ENCODE measurements at regions of chr6 and their contacts with region 1.

Region 1: DNA sequence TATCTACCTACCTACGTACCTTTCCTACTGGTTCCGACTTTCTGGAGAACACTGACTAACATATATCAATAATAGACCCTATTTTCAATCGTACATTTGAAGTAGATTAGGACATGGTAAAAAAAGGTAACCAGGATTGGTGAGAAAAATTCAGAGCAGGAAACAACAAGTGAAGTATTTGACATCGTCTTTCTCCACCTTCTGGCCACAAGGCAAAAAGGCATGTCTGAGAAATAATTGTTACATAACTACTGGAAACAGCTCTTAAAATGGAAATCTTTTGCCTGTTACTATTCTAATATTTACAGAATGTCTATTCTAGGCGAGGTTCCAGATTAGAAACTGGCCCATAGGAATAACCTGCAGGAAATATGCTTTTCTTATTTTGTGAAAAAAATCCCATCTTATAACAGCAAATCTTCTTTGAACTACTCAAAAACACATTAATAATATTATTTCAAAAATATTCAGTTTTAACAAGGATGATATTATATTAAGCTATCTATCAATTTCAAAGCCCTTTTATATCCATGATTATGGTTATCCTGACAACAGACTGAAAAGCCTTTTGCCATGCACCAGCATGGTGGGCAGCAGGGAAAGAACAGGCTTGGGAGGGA is 80.8 kb downstream of the RCAN2 start:
- DNase-seq: peak; percentile 74
- ATAC-seq: peak; percentile 43
- H3K4me3 ChIP-seq: no peak overlapping the region
- H3K4me3 Mint-ChIP-seq: no peak overlapping the region
- H3K27ac ChIP-seq: no peak overlapping the region
- H3K27ac Mint-ChIP-seq: no peak overlapping the region
- H3K4me1 ChIP-seq: no peaks in the 10 kb centered on the region
- H3K4me1 Mint-ChIP-seq: no peaks in the 10 kb centered on the region
- H3K27me3 ChIP-seq: no peaks in the 10 kb centered on the region
- H3K27me3 Mint-ChIP-seq: no peaks in the 10 kb centered on the region
- CTCF ChIP-seq: peak; percentile 97

Region 2: DNA sequence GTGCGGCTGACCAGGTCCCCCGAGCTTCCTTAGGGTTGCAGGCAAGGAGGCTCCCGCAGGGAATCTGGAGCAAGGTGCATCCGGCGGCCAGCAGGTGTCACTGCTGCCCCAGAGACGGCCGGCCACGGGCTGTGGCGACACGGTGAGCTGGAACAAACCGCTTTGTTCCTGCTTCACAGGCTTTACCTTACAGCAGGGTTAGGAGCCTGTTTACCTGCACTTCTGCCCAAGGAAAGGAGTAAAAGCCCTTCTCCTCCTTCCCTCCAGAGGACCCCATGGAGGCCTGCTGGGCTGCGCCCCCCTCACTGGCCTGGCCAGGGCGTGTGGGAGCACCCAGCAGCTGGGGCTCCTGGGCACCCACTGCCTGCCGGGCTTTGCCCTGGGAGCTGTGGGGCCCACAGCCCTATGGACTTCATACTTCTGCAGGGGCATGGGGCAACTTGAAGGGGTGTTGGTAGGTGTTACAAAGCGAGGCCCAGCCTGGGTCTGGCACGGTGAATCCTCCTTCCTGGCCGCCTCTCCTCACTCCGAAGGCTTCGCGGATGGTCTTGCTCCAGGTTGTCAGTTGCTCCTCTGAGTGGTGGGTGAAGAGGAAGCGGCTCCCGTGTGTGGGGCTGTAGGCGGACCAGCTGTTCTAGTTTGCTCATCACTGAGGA is 1934.5 kb before region 1 on chr6:
- CTCF ChIA-PET with region 1: interaction called, 13 read pairs
- POLR2A ChIA-PET with region 1: no interaction called
- intact Hi-C with region 1: no loop called
- DNase-seq: peak; percentile 63
- ATAC-seq: peak; percentile 39
- H3K4me3 ChIP-seq: no peak overlapping the region
- H3K4me3 Mint-ChIP-seq: no peak overlapping the region
- H3K27ac ChIP-seq: no peak overlapping the region
- H3K27ac Mint-ChIP-seq: no peak overlapping the region
- H3K4me1 ChIP-seq: peaks cover 0 to 6% of the 10 kb centered on the region in 2 donors
- H3K4me1 Mint-ChIP-seq: no peaks in the 10 kb centered on the region
- H3K27me3 ChIP-seq: peaks cover 0 to 9% (median 1%) of the 10 kb centered on the region in 4 experiments
- H3K27me3 Mint-ChIP-seq: peaks cover 15% of the 10 kb centered on the region
- CTCF ChIP-seq: peak; percentile 72

Region 3: DNA sequence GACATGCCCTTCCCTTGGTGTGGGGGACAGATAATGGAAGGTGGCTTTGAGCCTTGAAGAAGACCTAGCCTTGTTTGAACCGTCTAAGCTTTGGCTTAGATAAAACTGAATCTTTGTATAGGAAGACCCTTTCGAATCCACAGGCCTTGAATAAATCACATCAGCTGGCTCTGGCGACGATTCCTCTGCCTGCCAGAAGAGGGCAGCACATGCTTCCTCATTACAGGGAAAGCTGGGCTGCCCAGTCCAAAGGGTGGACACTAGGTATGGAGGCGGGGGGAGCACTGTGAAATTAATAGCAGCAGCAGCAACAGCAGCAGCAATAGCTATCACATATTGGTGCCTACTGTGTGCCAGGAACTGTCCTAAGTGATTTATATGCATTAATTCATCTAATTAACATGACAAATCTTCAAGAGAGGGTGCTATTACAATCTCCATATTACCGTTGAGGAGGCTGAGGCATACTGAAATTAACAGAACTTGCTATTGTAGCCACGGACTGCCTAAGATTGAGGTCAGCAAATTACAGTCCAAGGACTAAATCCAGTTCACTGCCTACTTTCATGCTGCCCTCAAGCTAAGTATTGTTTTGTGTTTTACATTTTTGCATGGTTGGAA is 479.9 kb before region 1 on chr6:
- CTCF ChIA-PET with region 1: interaction called, 34 read pairs
- POLR2A ChIA-PET with region 1: no interaction called
- intact Hi-C with region 1: loop called (anchors 1 kb)
- DNase-seq: peak; percentile 63
- ATAC-seq: no peak
- H3K4me3 ChIP-seq: no peak overlapping the region
- H3K4me3 Mint-ChIP-seq: no peak overlapping the region
- H3K27ac ChIP-seq: no peak overlapping the region
- H3K27ac Mint-ChIP-seq: no peak overlapping the region
- H3K4me1 ChIP-seq: no peaks in the 10 kb centered on the region
- H3K4me1 Mint-ChIP-seq: no peaks in the 10 kb centered on the region
- H3K27me3 ChIP-seq: no peaks in the 10 kb centered on the region
- H3K27me3 Mint-ChIP-seq: peaks cover 4% of the 10 kb centered on the region
- CTCF ChIP-seq: peak; percentile 99

Region 4: DNA sequence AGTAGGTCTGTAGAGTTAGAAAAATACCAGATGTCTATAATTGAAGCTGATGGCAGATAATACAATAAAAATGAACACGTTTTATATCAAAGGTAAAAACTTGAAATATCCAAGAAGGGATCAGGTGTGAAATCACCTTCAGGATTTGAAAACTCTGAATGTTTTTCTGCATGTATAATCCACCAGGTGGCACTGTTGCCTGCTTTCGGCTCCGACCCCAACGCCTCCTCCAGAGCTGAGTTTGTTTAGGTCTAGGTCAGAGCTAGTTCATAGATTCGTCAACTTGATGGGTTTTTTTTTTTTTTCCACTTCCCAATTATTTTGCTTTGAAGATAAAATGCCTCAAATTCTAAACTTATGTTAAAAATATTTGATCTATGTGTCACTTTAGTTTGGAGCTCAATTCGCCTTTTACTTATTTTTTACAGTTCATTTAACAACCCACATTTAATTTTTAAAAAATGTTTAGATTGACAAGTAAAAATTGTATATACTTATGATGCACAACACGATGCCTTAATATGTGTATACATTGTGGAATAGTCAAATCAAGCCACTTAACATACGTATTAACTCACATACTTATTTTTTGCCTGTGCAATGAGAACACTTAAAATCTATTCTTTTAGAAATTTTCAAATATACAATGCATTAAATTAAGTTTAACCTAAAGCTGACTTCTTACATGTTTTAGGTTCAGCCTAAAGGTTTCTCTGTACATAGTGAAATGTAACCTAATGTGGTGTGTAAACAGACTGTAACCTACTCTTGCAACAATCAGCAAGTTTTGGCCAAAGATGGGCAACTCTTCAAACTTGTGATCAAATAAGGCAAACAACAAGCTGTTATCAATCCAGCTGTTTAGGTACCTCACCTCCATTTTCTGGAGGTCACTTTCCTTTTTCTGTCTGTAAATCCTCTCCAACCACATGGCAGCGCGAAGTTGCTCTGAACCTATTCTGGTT is 320.0 kb before region 1 on chr6:
- CTCF ChIA-PET with region 1: interaction called, 340 read pairs
- POLR2A ChIA-PET with region 1: no interaction called
- intact Hi-C with region 1: no loop called
- DNase-seq: peak; percentile 70
- ATAC-seq: peak; percentile 54
- H3K4me3 ChIP-seq: no peak overlapping the region
- H3K4me3 Mint-ChIP-seq: no peak overlapping the region
- H3K27ac ChIP-seq: no peak overlapping the region
- H3K27ac Mint-ChIP-seq: no peak overlapping the region
- H3K4me1 ChIP-seq: no peaks in the 10 kb centered on the region
- H3K4me1 Mint-ChIP-seq: no peaks in the 10 kb centered on the region
- H3K27me3 ChIP-seq: peaks cover 0 to 3% (median 1%) of the 10 kb centered on the region in 4 experiments
- H3K27me3 Mint-ChIP-seq: peaks cover 24% of the 10 kb centered on the region
- CTCF ChIP-seq: peak; percentile 93

Region 5: DNA sequence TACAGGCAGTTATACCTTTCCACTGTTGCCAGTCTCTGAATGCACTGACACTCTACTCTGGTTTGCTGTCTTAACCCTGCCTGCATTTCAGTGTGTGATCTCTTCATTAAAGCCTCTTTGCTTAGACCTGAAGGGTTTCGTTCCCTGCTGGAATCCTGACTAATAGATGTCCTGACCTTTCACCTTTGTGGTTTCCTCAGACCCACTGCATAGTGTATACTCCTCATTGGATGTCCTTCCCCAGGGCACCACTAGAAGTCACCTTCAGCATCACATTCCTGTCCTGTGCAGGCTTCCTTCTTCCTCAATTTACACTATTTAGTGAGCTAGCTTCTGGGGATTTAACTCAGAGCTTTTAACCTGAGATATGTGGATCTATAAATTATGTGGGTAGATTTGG is 39.8 kb before region 1 on chr6:
- CTCF ChIA-PET with region 1: interaction called, 25 read pairs
- POLR2A ChIA-PET with region 1: no interaction called
- intact Hi-C with region 1: no loop called
- DNase-seq: no peak
- ATAC-seq: no peak
- H3K4me3 ChIP-seq: no peak overlapping the region
- H3K4me3 Mint-ChIP-seq: no peak overlapping the region
- H3K27ac ChIP-seq: no peak overlapping the region
- H3K27ac Mint-ChIP-seq: no peak overlapping the region
- H3K4me1 ChIP-seq: peaks cover 18 to 23% of the 10 kb centered on the region in 2 donors
- H3K4me1 Mint-ChIP-seq: peaks cover 37% of the 10 kb centered on the region
- H3K27me3 ChIP-seq: no peaks in the 10 kb centered on the region
- H3K27me3 Mint-ChIP-seq: no peaks in the 10 kb centered on the region
- CTCF ChIP-seq: no peak

Region 6: GRCh38 chr6:46376562-46377061 is 33.8 kb before region 1 on chr6:
- CTCF ChIA-PET with region 1: interaction called, 25 read pairs
- POLR2A ChIA-PET with region 1: no interaction called
- intact Hi-C with region 1: no loop called
- DNase-seq: peak; percentile 73
- ATAC-seq: peak; percentile 89
- H3K4me3 ChIP-seq: peak overlapping the region in 2 of 5 experiments; percentile 28 to 36
- H3K4me3 Mint-ChIP-seq: peak overlapping the region; percentile 75
- H3K27ac ChIP-seq: peak overlapping the region; percentile 62 to 69
- H3K27ac Mint-ChIP-seq: peak overlapping the region; percentile 89
- H3K4me1 ChIP-seq: peaks cover 41 to 42% of the 10 kb centered on the region in 2 donors
- H3K4me1 Mint-ChIP-seq: peaks cover 75% of the 10 kb centered on the region
- H3K27me3 ChIP-seq: no peaks in the 10 kb centered on the region
- H3K27me3 Mint-ChIP-seq: no peaks in the 10 kb centered on the region
- CTCF ChIP-seq: no peak

Measured in B cell (primary cell).